Activated T-helper 1 cell treated with anti-CD3 and anti-CD28 coated beads, Interleukin-12 subunit alpha, Interleukin-12 subunit beta, Interleukin-2, Interleukin-4 antibody, amounts not matched to agents 30 ng/mL and 10 ng/mL and 1 ng/mL, durations not matched to agents 14 hours and 24 hours and 36 hours (primary cell): ENCODE measurements at regions of chr18 and their contacts with region 1.

Region 1: DNA sequence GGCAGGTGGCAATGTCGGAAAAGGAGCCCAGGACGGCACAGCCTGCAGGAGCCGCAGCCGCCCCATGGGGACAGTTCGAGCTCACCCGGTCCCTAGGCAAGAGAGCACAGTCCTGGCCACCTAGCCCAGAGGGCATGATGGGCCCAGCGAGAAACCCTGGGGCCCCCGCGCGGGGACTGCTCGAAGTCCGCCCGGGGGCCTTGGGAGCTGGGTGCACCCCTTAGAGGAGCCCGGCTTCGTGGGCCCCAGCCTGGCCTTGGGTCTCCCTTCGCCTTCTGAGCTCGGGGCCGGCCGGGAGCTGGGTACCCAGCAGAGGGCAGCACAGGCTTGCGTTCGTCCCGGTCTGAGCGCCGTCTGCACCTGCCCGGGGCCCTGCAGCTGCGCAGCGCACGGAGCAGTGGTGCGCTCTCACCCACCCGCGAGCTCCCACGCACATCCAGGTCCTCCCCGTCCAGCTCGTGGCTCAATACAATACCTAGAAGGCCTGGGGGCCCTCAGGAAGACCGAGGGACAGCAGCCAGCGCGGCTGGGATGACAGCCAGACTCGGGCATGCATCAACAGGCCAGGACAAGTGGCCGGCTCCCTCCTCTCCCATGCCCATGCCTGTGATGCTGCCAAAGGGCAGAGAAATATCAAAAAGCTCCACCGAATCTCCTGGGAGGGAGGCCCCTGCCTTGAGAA is 96.2 kb upstream of the ZNF532 start:
- DNase-seq: peak; percentile 53
- H3K4me3 Mint-ChIP-seq: no peak overlapping the region
- H3K27ac Mint-ChIP-seq: no peak overlapping the region
- H3K4me1 Mint-ChIP-seq: peaks cover 9% of the 10 kb centered on the region
- H3K27me3 Mint-ChIP-seq: peaks cover 49% of the 10 kb centered on the region

Region 2: DNA sequence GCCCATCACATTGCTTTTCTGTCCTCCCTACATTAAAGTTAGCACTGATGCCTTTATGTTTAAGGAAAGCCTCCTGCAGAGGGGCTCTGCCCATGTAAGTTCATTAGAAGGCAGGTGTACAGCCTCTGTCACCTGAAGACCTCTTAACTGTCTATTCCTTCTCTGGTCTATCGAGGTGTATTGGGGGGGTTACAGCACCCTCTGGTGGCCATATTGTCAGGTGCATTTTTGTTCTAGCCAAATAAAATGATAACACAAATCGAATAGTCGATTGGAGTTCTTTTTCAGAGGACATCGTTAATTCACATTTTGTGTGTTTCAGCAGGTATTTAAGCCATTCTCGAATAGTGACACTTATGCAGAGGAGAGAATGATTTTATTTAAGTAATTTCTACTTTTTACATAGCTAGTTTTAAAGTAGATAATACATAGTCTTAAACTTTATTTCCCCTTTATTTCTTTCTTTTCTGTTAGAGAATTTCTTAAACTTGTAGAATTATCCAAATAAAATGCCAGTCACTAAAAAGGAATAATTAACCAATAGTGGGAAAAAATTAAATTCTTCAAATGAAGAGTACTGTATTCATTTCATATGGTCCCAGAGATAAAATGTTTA is 587.6 kb before region 1 on chr18:
- intact Hi-C with region 1: loop called (anchors 1 kb)
- DNase-seq: peak; percentile 11
- H3K4me3 Mint-ChIP-seq: no peak overlapping the region
- H3K27ac Mint-ChIP-seq: no peak overlapping the region
- H3K4me1 Mint-ChIP-seq: no peaks in the 10 kb centered on the region
- H3K27me3 Mint-ChIP-seq: peaks cover 9% of the 10 kb centered on the region

Region 3: DNA sequence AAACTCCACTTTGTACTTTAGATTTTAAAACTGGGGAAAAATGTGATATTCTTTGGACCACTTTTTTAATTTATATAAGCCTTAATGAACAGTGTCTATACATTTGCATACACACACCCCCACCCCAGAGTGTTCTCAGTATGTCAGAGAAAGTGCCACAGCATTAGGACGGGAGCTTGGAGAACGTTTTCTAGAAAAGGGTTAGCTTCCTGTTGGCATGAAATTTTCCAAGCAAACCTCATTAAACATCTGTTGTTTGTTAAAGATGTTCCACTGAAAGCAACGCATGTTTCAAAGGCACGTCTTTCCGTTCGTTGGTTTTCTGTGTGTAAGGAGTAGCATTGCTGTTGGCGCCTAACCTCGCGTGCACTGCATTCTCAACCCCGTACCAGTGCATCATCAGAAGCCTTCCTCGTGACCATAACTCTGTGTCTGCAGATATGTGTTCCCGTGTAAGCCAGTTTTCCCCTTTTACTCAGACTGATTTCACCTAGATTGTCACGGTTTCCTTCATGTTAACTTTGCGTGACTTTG is 368.0 kb before region 1 on chr18:
- intact Hi-C with region 1: loop called (anchors 1 kb)
- DNase-seq: no peak
- H3K4me3 Mint-ChIP-seq: peak overlapping the region; percentile 28
- H3K27ac Mint-ChIP-seq: peak overlapping the region; percentile 30
- H3K4me1 Mint-ChIP-seq: peaks cover 14% of the 10 kb centered on the region
- H3K27me3 Mint-ChIP-seq: no peaks in the 10 kb centered on the region

Region 4: GRCh38 chr18:58493516-58494253 is 274.7 kb before region 1 on chr18:
- intact Hi-C with region 1: loop called (anchors 1 kb)
- DNase-seq: peak; percentile 57
- H3K4me3 Mint-ChIP-seq: no peak overlapping the region
- H3K27ac Mint-ChIP-seq: no peak overlapping the region
- H3K4me1 Mint-ChIP-seq: peaks cover 12% of the 10 kb centered on the region
- H3K27me3 Mint-ChIP-seq: peaks cover 39% of the 10 kb centered on the region

Region 5: GRCh38 chr18:58529714-58530354 is 238.6 kb before region 1 on chr18:
- intact Hi-C with region 1: loop called (anchors 1 kb)
- DNase-seq: peak; percentile 43
- H3K4me3 Mint-ChIP-seq: no peak overlapping the region
- H3K27ac Mint-ChIP-seq: no peak overlapping the region
- H3K4me1 Mint-ChIP-seq: peaks cover 26% of the 10 kb centered on the region
- H3K27me3 Mint-ChIP-seq: peaks cover 10% of the 10 kb centered on the region

Region 6: GRCh38 chr18:59070181-59070912 is 301.9 kb after region 1 on chr18:
- intact Hi-C with region 1: loop called (anchors 1 kb)
- DNase-seq: peak; percentile 54
- H3K4me3 Mint-ChIP-seq: no peak overlapping the region
- H3K27ac Mint-ChIP-seq: no peak overlapping the region
- H3K4me1 Mint-ChIP-seq: no peaks in the 10 kb centered on the region
- H3K27me3 Mint-ChIP-seq: peaks cover 11% of the 10 kb centered on the region

Region 7: GRCh38 chr18:59376351-59376935 is 608.0 kb after region 1 on chr18:
- intact Hi-C with region 1: no loop called
- DNase-seq: no peak
- H3K4me3 Mint-ChIP-seq: no peak overlapping the region
- H3K27ac Mint-ChIP-seq: no peak overlapping the region
- H3K4me1 Mint-ChIP-seq: peaks cover 25% of the 10 kb centered on the region
- H3K27me3 Mint-ChIP-seq: peaks cover 27% of the 10 kb centered on the region